ENCODE measurements at regions of chr12 and their contacts with region 1.

Region 1: DNA sequence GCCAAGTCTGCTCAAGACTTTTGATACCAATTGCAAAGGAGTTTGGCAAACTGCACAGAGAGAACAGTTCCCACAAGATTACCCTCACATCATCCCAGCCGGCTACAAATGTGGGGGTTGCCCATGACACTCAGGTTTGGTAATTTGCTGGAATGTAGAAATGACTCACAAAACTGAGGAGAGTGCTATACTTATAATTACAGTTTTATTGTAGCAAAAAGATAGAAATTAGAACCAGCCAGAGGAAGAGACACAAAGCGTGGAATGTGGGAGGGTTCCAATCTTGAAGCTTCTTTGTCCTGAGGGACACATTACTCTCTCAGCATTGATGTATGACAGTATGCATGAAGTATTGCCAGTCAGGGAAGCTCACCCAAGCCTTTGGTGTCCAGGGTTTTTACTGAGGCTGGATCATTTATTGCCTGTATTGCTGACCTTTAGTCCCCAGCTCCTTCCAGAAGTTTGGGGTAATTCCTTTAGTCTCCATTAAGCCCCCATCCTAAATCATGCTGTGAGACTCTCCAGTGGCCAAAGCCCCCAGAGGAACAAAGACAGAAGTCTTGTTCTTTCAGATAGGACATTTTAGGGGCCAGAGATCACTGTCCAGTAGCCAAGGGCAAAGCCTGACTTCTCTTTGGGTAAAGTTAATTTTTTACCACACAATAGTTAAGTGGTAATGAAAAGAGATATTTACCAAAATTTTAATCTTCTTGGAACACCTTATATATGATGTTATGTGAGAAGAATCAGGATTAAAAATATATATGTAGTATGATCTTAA is 9.9 kb downstream of the TBK1 start:
- DNase-seq: no peak
- ATAC-seq: 0 out of 2 replicates have a peak, but pooled peaks have one; percentile 65
- H3K4me3 ChIP-seq: no peak overlapping the region
- H3K27ac ChIP-seq: no peak overlapping the region
- H3K4me1 ChIP-seq: peaks cover 16% of the 10 kb centered on the region
- H3K27me3 ChIP-seq: no peaks in the 10 kb centered on the region
- CTCF ChIP-seq: no peak

Region 2: GRCh38 chr12:64722895-64723294 is 261.1 kb after region 1 on chr12:
- CTCF ChIA-PET with region 1: interaction called, 10 read pairs
- POLR2A ChIA-PET with region 1: no interaction called
- in situ Hi-C with region 1: no loop called
- intact Hi-C with region 1: no loop called
- DNase-seq: no peak
- ATAC-seq: no peak
- H3K4me3 ChIP-seq: no peak overlapping the region
- H3K27ac ChIP-seq: no peak overlapping the region
- H3K4me1 ChIP-seq: no peaks in the 10 kb centered on the region
- H3K27me3 ChIP-seq: no peaks in the 10 kb centered on the region
- CTCF ChIP-seq: no peak

Measured in Panc1 (cell line).